Activated CD8-positive, alpha-beta memory T cell treated with anti-CD3 and anti-CD28 coated beads, Interleukin-2, amount 10 ng/mL, durations not matched to agents 7 days and 5 days (primary cell): ENCODE measurements at regions of chr19 and their contacts with region 1.

Region 1: DNA sequence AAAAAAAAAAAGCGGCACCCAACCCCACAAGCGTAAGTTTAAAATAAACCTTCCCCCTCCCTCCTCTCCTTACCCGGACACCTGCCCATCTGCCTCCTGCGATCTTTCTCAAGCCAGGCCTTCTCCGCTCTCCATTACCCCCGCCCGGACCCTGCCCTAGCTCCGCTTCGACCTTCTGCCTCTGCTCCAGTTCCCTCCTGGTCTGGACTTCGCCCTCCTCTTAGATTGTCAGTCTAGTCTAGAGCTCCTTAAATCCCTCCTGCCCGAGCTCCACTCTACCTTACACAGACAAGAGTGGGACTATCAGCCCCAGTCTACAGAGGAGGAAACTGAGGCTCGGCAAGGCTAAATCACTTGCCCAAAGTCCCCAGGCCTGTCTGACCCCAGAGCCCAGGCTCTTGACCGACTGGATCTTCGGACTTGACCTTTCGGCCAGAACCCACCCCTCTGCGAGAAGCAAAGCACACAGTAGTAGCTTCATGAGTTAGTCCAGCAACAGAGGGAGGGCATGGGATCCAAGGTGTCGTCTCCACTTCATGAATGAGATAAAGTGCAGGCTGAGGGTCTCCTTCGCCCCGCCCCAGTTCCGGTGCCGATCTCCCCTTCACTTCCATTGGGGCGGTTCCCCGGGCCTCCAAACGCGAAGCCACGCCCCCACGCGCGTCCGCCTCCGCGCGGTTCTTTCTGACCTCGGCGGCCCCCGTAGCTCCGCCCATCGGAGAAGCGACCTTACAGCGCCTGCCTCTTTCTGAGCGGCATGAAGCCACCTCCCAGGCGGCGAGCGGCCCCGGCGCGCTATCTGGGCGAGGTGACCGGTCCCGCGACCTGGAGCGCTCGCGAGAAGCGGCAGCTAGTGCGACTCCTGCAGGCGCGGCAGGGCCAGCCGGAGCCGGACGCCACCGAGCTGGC is at the start of gene SNAPC2:
- DNase-seq: peak; percentile 98
- ATAC-seq: peak; percentile 78
- H3K4me3 Mint-ChIP-seq: peak within 1 kb of the TSS; percentile 83
- H3K27ac Mint-ChIP-seq: peak within 1 kb of the TSS; percentile 92
- H3K4me1 Mint-ChIP-seq: peaks cover 32% of the 10 kb centered on the region
- H3K27me3 Mint-ChIP-seq: peaks cover 28% of the 10 kb centered on the region
- total RNA-seq, gene SNAPC2: 18.0 to 24.0 TPM

Region 2: GRCh38 chr19:7605490-7606222 is 314.2 kb before region 1 on chr19:
- CTCF ChIA-PET with region 1: no interaction called
- DNase-seq: peak; percentile 61
- ATAC-seq: peak; percentile 72
- H3K4me3 Mint-ChIP-seq: no peak overlapping the region
- H3K27ac Mint-ChIP-seq: no peak overlapping the region
- H3K4me1 Mint-ChIP-seq: no peaks in the 10 kb centered on the region
- H3K27me3 Mint-ChIP-seq: no peaks in the 10 kb centered on the region

Region 3: GRCh38 chr19:7903244-7904073 is 16.4 kb before region 1 on chr19 and contains the start of gene MAP2K7:
- CTCF ChIA-PET with region 1: interaction called, 26 read pairs
- DNase-seq: peak; percentile 100
- ATAC-seq: peak; percentile 89
- H3K4me3 Mint-ChIP-seq: peak within 1 kb of the TSS; percentile 86
- H3K27ac Mint-ChIP-seq: peak within 1 kb of the TSS; percentile 91
- H3K4me1 Mint-ChIP-seq: peaks cover 26% of the 10 kb centered on the region
- H3K27me3 Mint-ChIP-seq: no peaks in the 10 kb centered on the region
- total RNA-seq, gene MAP2K7: 38.0 to 41.6 TPM

Region 4: DNA sequence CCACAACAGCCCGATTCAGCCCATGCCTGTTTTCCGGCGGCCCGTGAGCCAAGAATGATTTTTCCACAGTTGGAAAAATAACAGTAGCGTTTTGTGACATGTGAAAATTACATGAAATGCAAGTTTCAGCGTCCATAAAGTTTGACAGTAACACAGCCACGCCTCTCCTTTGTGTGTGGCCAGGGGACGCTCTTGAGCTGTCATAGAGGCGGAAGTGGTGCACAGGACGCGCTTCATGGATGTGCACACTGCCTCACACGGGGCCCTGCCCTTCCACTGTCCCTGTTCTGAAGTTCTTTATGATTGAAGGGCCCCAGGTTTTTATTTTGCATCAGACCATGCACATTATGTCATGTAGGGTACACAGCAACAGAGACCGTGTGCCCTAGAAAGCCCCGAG is 97.9 kb after region 1 on chr19:
- CTCF ChIA-PET with region 1: no interaction called
- DNase-seq: peak; percentile 64
- ATAC-seq: peak; percentile 89
- H3K4me3 Mint-ChIP-seq: no peak overlapping the region
- H3K27ac Mint-ChIP-seq: peak overlapping the region; percentile 19
- H3K4me1 Mint-ChIP-seq: peaks cover 9% of the 10 kb centered on the region
- H3K27me3 Mint-ChIP-seq: no peaks in the 10 kb centered on the region